Activated CD8-positive, alpha-beta T cell treated with anti-CD3 and anti-CD28 coated beads, Interleukin-2, amount 10 ng/mL, durations not matched to agents 7 days and 5 days (primary cell): ENCODE measurements at regions of chr19 and their contacts with region 1.

Region 1: GRCh38 chr19:48506138-48506733 is 5.4 kb downstream of the LMTK3 start:
- DNase-seq: peak; percentile 52
- ATAC-seq: peak; percentile 32
- H3K4me3 Mint-ChIP-seq: no peak overlapping the region
- H3K27ac Mint-ChIP-seq: no peak overlapping the region
- H3K4me1 Mint-ChIP-seq: peaks cover 29% of the 10 kb centered on the region
- H3K27me3 Mint-ChIP-seq: no peaks in the 10 kb centered on the region

Region 2: DNA sequence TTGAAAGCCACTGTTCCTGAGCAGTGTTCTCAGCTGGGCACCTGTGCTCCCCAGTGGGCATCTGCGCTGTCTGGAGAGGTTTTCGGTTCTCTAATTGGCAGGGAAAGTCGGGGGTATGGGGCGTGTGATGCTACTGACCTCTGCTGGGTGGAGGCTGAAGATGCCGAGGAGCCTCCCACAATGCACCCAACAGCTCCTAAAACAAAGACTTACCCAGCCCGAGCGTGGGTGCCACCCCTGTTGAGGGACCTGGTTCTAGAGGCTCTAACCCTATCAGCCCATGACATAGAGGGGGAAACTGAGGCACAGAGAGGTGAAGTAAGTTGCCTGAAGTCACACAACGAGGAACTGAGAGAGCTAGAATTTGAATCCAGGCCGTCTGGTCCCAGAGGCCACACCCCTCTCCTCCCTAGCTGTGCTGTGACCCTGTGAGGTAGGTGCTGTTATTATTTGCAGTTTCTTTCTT is 102.6 kb after region 1 on chr19:
- CTCF ChIA-PET with region 1: interaction called, 16 read pairs
- POLR2A ChIA-PET with region 1: no interaction called
- DNase-seq: peak; percentile 71
- ATAC-seq: peak; percentile 79
- H3K4me3 Mint-ChIP-seq: no peak overlapping the region
- H3K27ac Mint-ChIP-seq: peak overlapping the region; percentile 46
- H3K4me1 Mint-ChIP-seq: peaks cover 4% of the 10 kb centered on the region
- H3K27me3 Mint-ChIP-seq: no peaks in the 10 kb centered on the region